ENCODE measurements at regions of chr2 and their contacts with region 1.

Region 1: GRCh38 chr2:105496271-105496670 is 97.4 kb upstream of the FHL2 start:
- DNase-seq: peak; percentile 47
- H3K4me3 ChIP-seq: no peak overlapping the region
- H3K27ac ChIP-seq: peak overlapping the region; percentile 95
- H3K4me1 ChIP-seq: peaks cover 47% of the 10 kb centered on the region
- H3K27me3 ChIP-seq: no peaks in the 10 kb centered on the region
- CTCF ChIP-seq: no peak

Region 2: DNA sequence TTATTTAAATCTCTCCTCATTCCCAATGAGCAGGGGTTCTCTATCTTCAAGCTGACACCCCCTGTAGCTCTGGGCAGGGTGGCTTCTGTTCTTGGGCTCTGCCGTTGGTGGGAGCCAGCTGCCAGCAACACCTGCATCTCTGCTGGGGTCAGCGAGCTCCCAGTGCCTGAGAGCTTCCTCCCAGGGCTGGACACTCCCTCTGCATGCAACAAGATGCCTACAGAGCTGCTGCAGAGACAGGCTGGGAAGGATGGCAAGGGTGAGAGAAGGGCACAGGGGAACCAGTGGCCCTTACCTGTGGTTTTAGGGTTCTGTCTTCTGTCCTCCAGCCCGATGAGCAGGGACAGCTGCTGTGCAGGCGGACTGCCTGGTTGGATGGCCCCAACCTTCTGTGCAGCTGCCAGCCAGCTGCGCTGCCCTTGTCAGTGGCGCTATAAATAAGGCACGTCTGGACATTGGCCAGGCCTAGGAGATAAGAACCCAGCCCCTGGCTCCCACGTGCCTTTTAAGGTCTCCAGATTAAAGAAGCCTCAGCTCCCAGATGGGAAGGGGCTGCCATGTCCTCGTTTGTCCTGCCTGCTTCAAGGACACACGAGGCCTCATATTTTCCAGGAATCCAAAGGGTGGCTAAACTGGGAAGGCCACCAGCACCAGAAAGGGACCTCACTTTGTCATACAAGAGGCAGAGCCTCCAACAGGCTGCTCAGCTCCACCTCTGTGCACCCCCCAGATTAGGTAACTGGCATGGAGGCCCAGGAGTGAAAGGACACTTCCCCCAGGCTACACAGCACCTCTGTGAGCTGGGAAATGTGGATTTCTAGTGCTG is 58.0 kb before region 1 on chr2:
- intact Hi-C with region 1: loop called (anchors 10 kb)
- DNase-seq: peak; percentile 80
- H3K4me3 ChIP-seq: peak overlapping the region; percentile 66
- H3K27ac ChIP-seq: peak overlapping the region; percentile 94
- H3K4me1 ChIP-seq: peaks cover 20% of the 10 kb centered on the region
- H3K27me3 ChIP-seq: peaks cover 5% of the 10 kb centered on the region
- CTCF ChIP-seq: no peak

Measured in left ventricle myocardium inferior (tissue), 1 donor.